GM12878 (cell line): ENCODE measurements at regions of chr20 and their contacts with region 1.

Region 1: DNA sequence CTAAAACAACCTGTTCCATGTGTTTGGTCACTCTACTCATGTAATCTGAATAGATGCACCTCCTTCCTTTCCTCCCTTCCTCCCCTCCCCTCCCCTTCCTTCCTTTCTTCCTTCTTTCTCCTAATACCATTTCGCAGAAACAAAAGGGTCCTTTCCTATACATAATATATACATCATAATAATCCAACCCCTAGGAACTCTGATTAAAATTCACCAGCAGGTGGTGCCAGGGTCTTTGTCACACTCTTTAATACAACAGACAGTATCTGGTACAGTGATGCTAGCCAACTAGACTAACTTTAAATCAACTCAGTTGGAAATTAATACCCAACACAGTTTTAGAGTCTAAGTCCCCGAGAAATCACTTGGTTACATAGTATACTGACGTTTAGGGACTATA is 181.2 kb upstream of the SHLD1 start:
- DNase-seq: no peak
- ATAC-seq: peak; percentile 85
- H3K4me3 ChIP-seq: no peak overlapping the region
- H3K27ac ChIP-seq: no peak overlapping the region
- H3K4me1 ChIP-seq: no peaks in the 10 kb centered on the region
- H3K27me3 ChIP-seq: no peaks in the 10 kb centered on the region
- CTCF ChIP-seq: peak; percentile 34 to 62 (median 38); a peak in 5 of 6 replicates
- EP300 ChIP-seq: no peak
- POLR2A ChIP-seq: no peak
- RAD21 ChIP-seq: peak; percentile 78

Region 2: DNA sequence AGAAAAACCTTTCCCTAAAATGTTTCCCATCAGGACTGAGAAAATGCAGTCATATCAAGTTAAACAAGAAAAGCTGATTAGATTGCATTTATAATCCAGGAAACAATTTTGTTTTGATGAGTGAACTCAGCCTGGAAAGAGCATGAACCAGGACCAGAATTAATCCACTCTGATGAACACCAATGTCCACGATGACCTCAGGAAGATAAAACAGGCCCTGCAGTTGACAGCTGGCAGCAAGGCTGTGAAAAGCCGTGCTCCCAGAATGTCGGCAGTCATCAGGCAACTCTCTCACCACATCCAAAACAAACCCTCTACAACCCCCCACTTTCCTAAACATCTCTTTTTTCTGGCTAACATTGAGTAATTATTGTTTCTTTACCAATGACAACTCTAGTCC is 178.3 kb before region 1 on chr20:
- CTCF ChIA-PET with region 1: no interaction called
- POLR2A ChIA-PET with region 1: no interaction called
- RAD21 ChIA-PET with region 1: no interaction called
- SMC1A ChIA-PET with region 1: no interaction called
- in situ Hi-C with region 1: no loop called
- intact Hi-C with region 1: no loop called
- DNase-seq: no peak
- ATAC-seq: no peak
- H3K4me3 ChIP-seq: no peak overlapping the region
- H3K27ac ChIP-seq: no peak overlapping the region
- H3K4me1 ChIP-seq: no peaks in the 10 kb centered on the region
- H3K27me3 ChIP-seq: 0 out of 4 replicates have a peak, but pooled peaks cover 0 to 4% of the 10 kb centered on the region in 2 experiments
- CTCF ChIP-seq: no peak
- EP300 ChIP-seq: no peak
- POLR2A ChIP-seq: no peak
- RAD21 ChIP-seq: no peak

Region 3: DNA sequence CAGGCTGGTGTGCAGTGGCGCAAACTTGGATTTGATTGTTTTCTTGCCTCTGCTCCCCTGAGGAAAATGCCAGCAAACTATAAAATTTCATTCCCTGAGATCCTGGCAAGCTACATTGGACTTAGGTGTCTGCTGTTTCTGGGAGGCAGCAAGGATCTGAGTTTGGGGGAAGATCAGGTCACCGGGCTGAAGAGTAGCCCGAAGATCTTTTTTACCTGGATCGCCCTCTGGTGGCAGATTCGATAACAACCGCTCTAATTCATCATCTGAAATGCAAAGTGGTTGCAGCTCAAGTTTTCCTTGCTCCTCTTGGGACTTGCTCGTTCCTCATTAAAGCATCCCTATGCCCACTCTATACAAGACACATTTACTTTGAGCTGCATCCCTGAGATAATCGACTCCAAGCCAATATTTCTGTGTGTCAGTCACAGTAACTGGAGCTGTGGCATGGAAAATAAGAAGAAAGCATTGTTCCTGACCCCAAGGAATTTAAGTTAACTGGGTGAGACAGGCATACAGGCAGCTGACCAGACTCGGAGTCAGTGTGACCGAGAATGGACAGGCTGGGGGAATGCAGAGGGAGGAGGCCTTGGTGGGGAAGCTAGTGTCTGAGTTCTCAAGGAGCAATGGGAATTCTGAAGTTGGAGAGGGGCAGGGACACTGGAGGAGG is 120.4 kb before region 1 on chr20:
- CTCF ChIA-PET with region 1: no interaction called
- POLR2A ChIA-PET with region 1: no interaction called
- RAD21 ChIA-PET with region 1: no interaction called
- SMC1A ChIA-PET with region 1: no interaction called
- in situ Hi-C with region 1: no loop called
- intact Hi-C with region 1: no loop called
- DNase-seq: no peak
- ATAC-seq: peak; percentile 75
- H3K4me3 ChIP-seq: no peak overlapping the region
- H3K27ac ChIP-seq: no peak overlapping the region
- H3K4me1 ChIP-seq: no peaks in the 10 kb centered on the region
- H3K27me3 ChIP-seq: no peaks in the 10 kb centered on the region
- CTCF ChIP-seq: peak; percentile 65 to 72 (median 67)
- EP300 ChIP-seq: no peak
- POLR2A ChIP-seq: no peak
- RAD21 ChIP-seq: peak; percentile 60

Region 4: GRCh38 chr20:5480824-5481600 is 88.0 kb before region 1 on chr20:
- CTCF ChIA-PET with region 1: no interaction called
- POLR2A ChIA-PET with region 1: no interaction called
- RAD21 ChIA-PET with region 1: no interaction called
- SMC1A ChIA-PET with region 1: no interaction called
- in situ Hi-C with region 1: no loop called
- intact Hi-C with region 1: no loop called
- DNase-seq: no peak
- ATAC-seq: peak; percentile 70
- H3K4me3 ChIP-seq: no peak overlapping the region
- H3K27ac ChIP-seq: no peak overlapping the region
- H3K4me1 ChIP-seq: peaks cover 20% of the 10 kb centered on the region
- H3K27me3 ChIP-seq: no peaks in the 10 kb centered on the region
- CTCF ChIP-seq: no peak
- EP300 ChIP-seq: no peak
- POLR2A ChIP-seq: no peak
- RAD21 ChIP-seq: no peak

Region 5: GRCh38 chr20:5580936-5581708 is 12.1 kb after region 1 on chr20:
- CTCF ChIA-PET with region 1: interaction called, 16 read pairs
- POLR2A ChIA-PET with region 1: interaction called, 8 read pairs
- RAD21 ChIA-PET with region 1: interaction called, 6 read pairs
- SMC1A ChIA-PET with region 1: interaction called, 27 read pairs
- in situ Hi-C with region 1: no loop called
- intact Hi-C with region 1: no loop called
- DNase-seq: no peak
- ATAC-seq: no peak; the same call in 1 of the 3 replicates
- H3K4me3 ChIP-seq: no peak overlapping the region
- H3K27ac ChIP-seq: no peak overlapping the region
- H3K4me1 ChIP-seq: peaks cover under 1% of the 10 kb centered on the region; the same call in 1 of the 2 replicates
- H3K27me3 ChIP-seq: no peaks in the 10 kb centered on the region
- CTCF ChIP-seq: no peak
- EP300 ChIP-seq: no peak
- POLR2A ChIP-seq: no peak
- RAD21 ChIP-seq: no peak

Region 6: GRCh38 chr20:5596401-5597193 is 27.6 kb after region 1 on chr20:
- CTCF ChIA-PET with region 1: interaction called, 13 read pairs
- POLR2A ChIA-PET with region 1: interaction called, 4 read pairs
- RAD21 ChIA-PET with region 1: interaction called, 16 read pairs
- SMC1A ChIA-PET with region 1: interaction called, 37 read pairs
- in situ Hi-C with region 1: no loop called
- intact Hi-C with region 1: no loop called
- DNase-seq: no peak
- ATAC-seq: peak; percentile 45
- H3K4me3 ChIP-seq: peak overlapping the region; percentile 48; the same call in 1 of the 2 replicates
- H3K27ac ChIP-seq: peak overlapping the region; percentile 96
- H3K4me1 ChIP-seq: peaks cover 72% of the 10 kb centered on the region
- H3K27me3 ChIP-seq: no peaks in the 10 kb centered on the region
- CTCF ChIP-seq: no peak
- EP300 ChIP-seq: no peak
- POLR2A ChIP-seq: no peak
- RAD21 ChIP-seq: 0 out of 2 replicates have a peak, but pooled peaks have one; percentile 3

Region 7: DNA sequence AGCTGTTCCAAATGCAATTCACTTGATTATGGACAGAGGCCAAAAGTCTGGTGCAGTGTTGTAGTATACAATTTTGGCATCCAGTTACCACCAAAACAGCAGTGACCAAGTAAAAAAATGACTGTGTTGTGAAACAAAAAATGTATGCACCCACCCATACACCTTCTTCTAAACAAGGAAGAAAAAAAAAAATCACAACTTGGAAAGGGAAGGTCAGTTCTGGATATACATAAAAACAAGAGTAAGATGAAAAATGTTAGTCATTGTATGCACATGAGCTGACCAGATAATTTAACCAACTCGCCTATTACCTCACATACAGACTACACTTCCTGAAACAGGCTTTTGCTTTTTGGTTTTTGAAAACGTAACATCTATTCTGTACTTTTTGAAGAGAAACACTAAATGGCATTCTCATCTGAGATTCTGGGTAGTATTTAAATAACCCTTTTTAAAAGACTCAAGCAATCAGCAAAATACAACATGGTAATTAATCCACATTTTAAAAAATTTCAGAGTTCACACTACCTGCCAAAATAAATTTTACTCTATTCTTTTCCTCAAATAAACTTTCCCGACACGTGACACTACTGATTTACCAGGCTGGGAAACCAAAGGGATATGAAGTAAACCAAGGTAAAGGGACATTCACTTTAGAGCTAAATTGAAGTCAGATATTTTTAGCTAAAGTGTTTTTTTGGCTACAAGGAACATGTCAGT is 39.6 kb after region 1 on chr20:
- CTCF ChIA-PET with region 1: interaction called, 21 read pairs
- POLR2A ChIA-PET with region 1: interaction called, 8 read pairs
- RAD21 ChIA-PET with region 1: interaction called, 4 read pairs
- SMC1A ChIA-PET with region 1: interaction called, 4 read pairs
- in situ Hi-C with region 1: no loop called
- intact Hi-C with region 1: no loop called
- DNase-seq: no peak
- ATAC-seq: peak; percentile 15
- H3K4me3 ChIP-seq: peak overlapping the region; percentile 87
- H3K27ac ChIP-seq: peak overlapping the region; percentile 98
- H3K4me1 ChIP-seq: peaks cover 5% of the 10 kb centered on the region; the same call in 1 of the 2 replicates
- H3K27me3 ChIP-seq: no peaks in the 10 kb centered on the region
- CTCF ChIP-seq: no peak
- EP300 ChIP-seq: no peak
- POLR2A ChIP-seq: no peak
- RAD21 ChIP-seq: no peak

Region 8: GRCh38 chr20:5658912-5659345 is 89.9 kb after region 1 on chr20:
- CTCF ChIA-PET with region 1: interaction called, 3 read pairs
- POLR2A ChIA-PET with region 1: interaction called, 3 read pairs
- RAD21 ChIA-PET with region 1: no interaction called
- SMC1A ChIA-PET with region 1: interaction called, 10 read pairs
- in situ Hi-C with region 1: no loop called
- intact Hi-C with region 1: no loop called
- DNase-seq: no peak
- ATAC-seq: peak; percentile 67
- H3K4me3 ChIP-seq: no peak overlapping the region
- H3K27ac ChIP-seq: no peak overlapping the region
- H3K4me1 ChIP-seq: peaks cover 23% of the 10 kb centered on the region
- H3K27me3 ChIP-seq: no peaks in the 10 kb centered on the region
- CTCF ChIP-seq: no peak
- EP300 ChIP-seq: no peak
- POLR2A ChIP-seq: no peak
- RAD21 ChIP-seq: no peak